Calu3 (cell line): ENCODE measurements at regions of chr7 and their contacts with region 1.

Region 1: GRCh38 chr7:37201003-37201875 is 247.4 kb downstream of the ELMO1 start:
- DNase-seq: peak; percentile 89
- H3K4me3 Mint-ChIP-seq: no peak overlapping the region
- H3K27ac Mint-ChIP-seq: no peak overlapping the region
- H3K4me1 Mint-ChIP-seq: peaks cover 5% of the 10 kb centered on the region
- H3K27me3 Mint-ChIP-seq: peaks cover 33% of the 10 kb centered on the region
- CTCF ChIP-seq: peak; percentile 88

Region 2: DNA sequence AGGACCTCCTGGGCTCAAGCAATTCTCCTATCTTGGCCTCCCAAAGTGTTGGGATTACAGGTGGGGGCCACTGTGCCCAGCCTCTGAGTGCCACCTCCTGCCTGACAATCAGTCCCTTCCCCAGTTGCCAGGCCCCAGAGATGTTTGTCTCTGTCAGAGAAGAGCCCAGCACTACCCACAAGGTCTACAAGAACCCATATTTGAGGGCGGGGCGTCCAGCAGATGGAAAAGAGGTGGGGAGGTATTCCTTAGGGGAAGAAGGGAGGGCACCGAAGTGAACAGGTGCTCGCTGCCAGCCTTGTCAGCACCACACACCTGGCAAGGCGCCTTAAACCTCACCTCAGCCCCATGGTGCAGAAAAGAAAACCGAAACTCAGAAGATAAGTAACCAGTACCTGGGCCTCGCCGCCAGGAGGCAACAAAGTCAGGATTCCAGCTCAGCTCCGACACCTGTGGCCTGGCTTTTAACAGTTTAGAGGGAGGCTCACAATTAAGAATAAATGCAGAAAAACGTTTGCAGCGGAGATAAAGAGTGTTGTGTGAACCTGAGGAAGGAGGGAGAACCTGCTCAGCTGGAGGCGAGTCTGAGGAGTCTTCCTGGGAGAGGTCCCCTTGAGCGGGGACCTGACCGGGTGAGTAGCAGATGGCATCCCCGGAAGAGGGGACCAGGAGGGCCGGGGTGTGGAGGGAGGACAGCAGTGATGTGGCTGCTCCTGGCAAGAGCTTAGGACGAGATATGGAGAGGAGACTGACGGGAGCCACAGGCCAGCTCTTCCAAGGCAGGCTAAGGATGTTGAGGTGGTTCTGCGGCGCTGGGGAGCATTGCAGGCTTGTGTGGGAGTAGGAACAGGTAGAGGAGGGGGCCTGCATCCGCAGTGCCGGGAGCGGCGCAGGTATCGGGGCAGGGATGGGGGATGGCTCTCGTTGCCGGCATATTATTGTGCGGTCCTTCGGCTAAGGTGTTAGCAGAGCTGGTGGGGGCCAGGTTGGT is 888.6 kb before region 1 on chr7:
- CTCF ChIA-PET with region 1: no interaction called
- intact Hi-C with region 1: loop called (anchors 1 kb)
- DNase-seq: peak; percentile 87
- H3K4me3 Mint-ChIP-seq: no peak overlapping the region
- H3K27ac Mint-ChIP-seq: peak overlapping the region; percentile 7
- H3K4me1 Mint-ChIP-seq: peaks cover 20% of the 10 kb centered on the region
- H3K27me3 Mint-ChIP-seq: no peaks in the 10 kb centered on the region
- CTCF ChIP-seq: peak; percentile 94

Region 3: GRCh38 chr7:36440880-36441279 is 760.4 kb before region 1 on chr7:
- CTCF ChIA-PET with region 1: interaction called, 7 read pairs
- intact Hi-C with region 1: loop called (anchors 1 kb)
- DNase-seq: no peak
- H3K4me3 Mint-ChIP-seq: no peak overlapping the region
- H3K27ac Mint-ChIP-seq: no peak overlapping the region
- H3K4me1 Mint-ChIP-seq: no peaks in the 10 kb centered on the region
- H3K27me3 Mint-ChIP-seq: no peaks in the 10 kb centered on the region
- CTCF ChIP-seq: no peak

Region 4: DNA sequence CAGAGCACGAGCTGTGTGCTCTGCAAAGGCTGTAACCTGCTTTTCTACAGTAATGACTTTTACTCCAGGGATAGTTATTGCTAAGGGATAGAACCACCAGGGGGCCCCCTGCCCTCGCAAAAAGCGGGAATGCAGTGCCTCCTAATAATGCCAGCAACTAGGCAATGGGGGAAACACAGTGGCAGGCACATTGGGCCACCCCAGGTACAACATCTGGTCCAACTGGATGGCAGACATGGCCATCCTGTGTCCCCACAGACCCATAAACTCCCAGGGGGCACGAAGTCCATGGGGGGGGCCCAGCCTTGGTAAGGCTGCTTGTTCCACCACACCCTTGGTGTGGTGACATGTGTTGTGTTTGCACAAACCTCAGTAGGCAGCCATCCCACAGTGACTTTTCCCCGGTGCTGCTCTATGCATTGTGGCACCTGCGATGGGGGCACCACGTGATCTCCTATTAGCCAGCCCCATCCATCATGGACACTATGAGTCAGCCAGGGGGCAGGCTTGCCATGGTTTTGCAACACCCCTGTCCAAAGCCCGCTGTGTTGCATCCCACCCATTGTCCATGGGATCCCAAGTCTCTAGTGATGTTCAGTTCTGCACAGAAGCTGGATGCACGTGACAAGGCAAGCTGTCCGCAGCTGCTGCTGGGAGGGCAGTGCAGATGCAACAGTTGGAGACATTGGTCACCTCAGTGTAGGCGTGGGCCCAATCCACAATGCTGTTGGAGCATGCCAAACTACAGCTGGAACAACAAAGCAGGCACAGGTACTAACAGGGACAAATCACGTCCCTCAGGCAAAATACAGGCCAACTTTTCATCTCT is 727.6 kb before region 1 on chr7:
- CTCF ChIA-PET with region 1: interaction called, 5 read pairs
- intact Hi-C with region 1: loop called (anchors 1 kb)
- DNase-seq: peak; percentile 89
- H3K4me3 Mint-ChIP-seq: no peak overlapping the region
- H3K27ac Mint-ChIP-seq: peak overlapping the region; percentile 68
- H3K4me1 Mint-ChIP-seq: peaks cover 49% of the 10 kb centered on the region
- H3K27me3 Mint-ChIP-seq: no peaks in the 10 kb centered on the region
- CTCF ChIP-seq: peak; percentile 88

Region 5: GRCh38 chr7:36686499-36686898 is 514.7 kb before region 1 on chr7:
- CTCF ChIA-PET with region 1: interaction called, 3 read pairs
- intact Hi-C with region 1: loop called (anchors 5 kb)
- DNase-seq: peak; percentile 28
- H3K4me3 Mint-ChIP-seq: no peak overlapping the region
- H3K27ac Mint-ChIP-seq: peak overlapping the region; percentile 7
- H3K4me1 Mint-ChIP-seq: peaks cover 18% of the 10 kb centered on the region
- H3K27me3 Mint-ChIP-seq: no peaks in the 10 kb centered on the region
- CTCF ChIP-seq: no peak

Region 6: DNA sequence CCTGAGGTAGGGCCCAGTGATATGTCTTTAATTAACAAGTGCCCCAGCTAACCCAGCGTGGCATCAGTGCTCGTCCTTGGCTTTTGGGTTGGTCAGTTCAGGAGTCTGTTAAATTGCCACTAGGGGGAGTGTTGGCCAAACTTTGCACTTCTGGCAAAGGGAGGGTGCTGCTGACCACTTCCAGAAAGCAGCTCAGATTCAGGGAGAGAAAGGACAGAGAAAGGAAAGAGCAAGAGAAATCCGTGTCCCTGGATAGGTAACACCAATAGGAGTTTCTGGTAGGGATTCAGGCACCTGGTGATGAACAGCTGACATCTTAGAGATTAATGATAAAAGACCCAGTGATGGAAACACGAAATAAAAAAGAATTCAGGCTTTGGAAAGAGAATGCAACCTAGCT is 233.9 kb before region 1 on chr7:
- CTCF ChIA-PET with region 1: interaction called, 12 read pairs
- intact Hi-C with region 1: loop called (anchors 1 kb)
- DNase-seq: peak; percentile 75
- H3K4me3 Mint-ChIP-seq: no peak overlapping the region
- H3K27ac Mint-ChIP-seq: no peak overlapping the region
- H3K4me1 Mint-ChIP-seq: peaks cover 51% of the 10 kb centered on the region
- H3K27me3 Mint-ChIP-seq: no peaks in the 10 kb centered on the region
- CTCF ChIP-seq: peak; percentile 87

Region 7: DNA sequence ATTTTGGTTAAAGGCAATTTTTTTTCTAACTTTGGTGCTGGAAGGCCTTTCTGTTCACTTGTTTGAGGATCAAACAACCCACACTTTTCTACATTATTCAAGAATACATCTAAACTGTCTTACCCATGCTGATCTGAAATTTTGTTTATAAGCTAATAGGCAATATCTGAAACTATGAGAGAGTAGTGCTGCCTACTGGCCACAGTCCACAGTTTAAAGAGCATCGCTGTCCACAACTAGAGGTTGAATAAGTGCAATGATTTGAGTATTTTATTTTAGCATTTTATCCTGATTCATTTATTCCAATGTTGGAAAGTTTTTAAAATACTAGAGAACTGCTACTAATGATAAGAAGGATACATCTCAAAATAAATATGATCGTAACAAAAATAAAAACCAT is 59.5 kb before region 1 on chr7:
- CTCF ChIA-PET with region 1: no interaction called
- intact Hi-C with region 1: no loop called
- DNase-seq: no peak
- H3K4me3 Mint-ChIP-seq: no peak overlapping the region
- H3K27ac Mint-ChIP-seq: no peak overlapping the region
- H3K4me1 Mint-ChIP-seq: no peaks in the 10 kb centered on the region
- H3K27me3 Mint-ChIP-seq: no peaks in the 10 kb centered on the region
- CTCF ChIP-seq: no peak